ENCODE measurements at regions of chr2 and their contacts with region 1.

Region 1: GRCh38 chr2:45283764-45284620 is 274.7 kb upstream of the SIX2 start:
- DNase-seq: peak in 1 of 2 donors; percentile 21
- ATAC-seq: peak; percentile 89 to 94
- H3K4me3 ChIP-seq: no peak overlapping the region
- H3K27ac ChIP-seq: peak overlapping the region in 1 of 4 donors; percentile 24
- H3K4me1 ChIP-seq: no peaks in the 10 kb centered on the region
- H3K27me3 ChIP-seq: no peaks in the 10 kb centered on the region
- CTCF ChIP-seq: no peak
- POLR2A ChIP-seq: no peak

Region 2: DNA sequence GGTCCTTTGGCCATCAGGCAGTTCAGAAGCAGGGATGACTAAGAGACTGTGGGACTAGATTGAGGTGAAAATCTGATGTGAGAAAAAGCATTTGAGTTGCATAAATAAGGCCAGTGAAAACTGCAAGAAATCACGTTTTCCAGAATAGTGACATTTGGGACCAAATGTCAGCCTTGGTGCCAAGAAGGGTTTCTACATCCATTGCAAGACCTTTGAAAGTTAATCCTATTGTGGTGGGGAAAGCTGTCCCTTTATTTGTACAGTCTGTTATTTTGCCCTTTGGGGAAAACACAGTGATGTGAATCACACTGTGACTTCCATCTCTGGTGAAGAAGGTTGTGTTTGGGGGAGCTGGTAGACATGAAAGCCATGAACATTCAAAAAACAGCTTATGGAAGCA is 121.3 kb before region 1 on chr2:
- in situ Hi-C with region 1: no loop called
- intact Hi-C with region 1: loop called (anchors 5 kb)
- DNase-seq: no peak
- ATAC-seq: peak in 1 of 2 donors; percentile 50
- H3K4me3 ChIP-seq: no peak overlapping the region
- H3K27ac ChIP-seq: no peak overlapping the region
- H3K4me1 ChIP-seq: no peaks in the 10 kb centered on the region
- H3K27me3 ChIP-seq: peaks cover 11 to 26% (median 18%) of the 10 kb centered on the region in 3 donors
- CTCF ChIP-seq: no peak
- POLR2A ChIP-seq: no peak

Measured in gastrocnemius medialis (tissue), 4 donors.